ENCODE measurements at regions of chr5 and their contacts with region 1.

Region 1: DNA sequence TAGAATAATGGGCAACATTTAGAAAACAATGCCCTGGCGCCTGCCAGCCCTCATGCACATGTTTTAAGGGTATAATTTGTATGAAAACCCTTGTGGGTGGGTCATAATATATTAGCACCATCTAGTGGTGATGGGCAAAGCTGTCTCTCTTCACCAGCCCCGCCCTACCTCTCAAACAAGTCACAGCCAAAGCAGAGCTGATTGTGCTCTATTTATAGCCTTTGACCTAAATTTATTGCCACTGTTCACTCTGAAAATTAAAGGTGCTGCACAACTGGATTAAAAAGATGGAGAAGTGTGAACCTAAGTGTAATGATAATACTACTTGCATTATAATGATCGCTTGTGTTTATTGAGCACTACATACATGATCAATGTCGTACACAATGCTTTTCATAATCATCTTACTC is 131.9 kb upstream of the ANKH start:
- DNase-seq: peak in 1 of 2 experiments; percentile 49
- H3K4me3 ChIP-seq: no peak overlapping the region
- H3K27ac ChIP-seq: no peak overlapping the region
- H3K4me1 ChIP-seq: no peaks in the 10 kb centered on the region
- H3K27me3 ChIP-seq: no peaks in the 10 kb centered on the region
- CTCF ChIP-seq: peak; percentile 46 to 78 (median 76)
- EP300 ChIP-seq: no peak
- POLR2A ChIP-seq: no peak
- RAD21 ChIP-seq: peak; percentile 88

Region 2: GRCh38 chr5:14685757-14686156 is 317.8 kb before region 1 on chr5:
- CTCF ChIA-PET with region 1: interaction called, 54 read pairs
- POLR2A ChIA-PET with region 1: no interaction called
- DNase-seq: no peak
- H3K4me3 ChIP-seq: no peak overlapping the region
- H3K27ac ChIP-seq: no peak overlapping the region
- H3K4me1 ChIP-seq: no peaks in the 10 kb centered on the region
- H3K27me3 ChIP-seq: no peaks in the 10 kb centered on the region
- CTCF ChIP-seq: peak in 2 of 3 experiments; percentile 73 to 74; a peak in 3 of 4 replicates
- EP300 ChIP-seq: no peak
- POLR2A ChIP-seq: no peak
- RAD21 ChIP-seq: peak; percentile 81 to 89

Region 3: DNA sequence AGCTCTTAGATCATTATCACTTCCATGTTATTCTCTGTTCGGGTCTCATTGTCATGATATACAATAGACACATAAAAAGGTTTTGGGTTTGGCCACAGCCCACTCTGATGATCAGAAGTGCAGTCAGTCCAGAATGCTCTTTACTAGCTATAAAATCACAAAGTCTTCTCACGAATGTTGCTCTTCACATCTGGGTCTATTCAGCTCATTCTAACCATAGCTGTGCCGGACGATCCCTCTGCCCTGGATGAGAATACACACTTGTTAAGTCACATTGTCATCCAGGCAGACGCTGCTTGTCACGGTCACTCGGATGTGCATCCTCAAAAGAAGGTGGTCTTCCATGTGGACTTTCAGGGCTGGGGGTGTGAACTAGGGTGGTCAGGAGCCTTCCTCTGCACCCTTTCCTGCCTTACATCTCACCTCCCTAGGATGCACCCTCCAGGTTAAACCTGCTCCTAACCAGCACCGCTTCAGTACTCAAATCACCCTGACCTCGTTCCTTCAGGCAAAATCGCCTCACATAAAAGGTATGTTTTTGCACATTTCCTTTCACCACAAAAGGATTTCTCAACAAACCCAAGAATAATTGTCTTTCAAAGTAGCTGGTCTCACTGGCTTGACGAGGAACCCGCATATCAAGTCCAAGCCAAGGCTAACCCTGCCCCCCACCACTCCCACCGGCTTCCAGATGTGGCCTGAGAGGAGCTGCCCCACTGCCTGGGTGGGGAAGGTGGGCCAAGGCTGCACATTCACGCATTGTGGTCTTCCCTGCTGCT is 153.8 kb before region 1 on chr5:
- CTCF ChIA-PET with region 1: interaction called, 10 read pairs
- POLR2A ChIA-PET with region 1: no interaction called
- DNase-seq: no peak
- H3K4me3 ChIP-seq: no peak overlapping the region
- H3K27ac ChIP-seq: no peak overlapping the region
- H3K4me1 ChIP-seq: peaks cover 5 to 14% (median 13%) of the 10 kb centered on the region in 4 experiments
- H3K27me3 ChIP-seq: no peaks in the 10 kb centered on the region
- CTCF ChIP-seq: no peak
- EP300 ChIP-seq: no peak
- POLR2A ChIP-seq: no peak
- RAD21 ChIP-seq: no peak

Region 4: DNA sequence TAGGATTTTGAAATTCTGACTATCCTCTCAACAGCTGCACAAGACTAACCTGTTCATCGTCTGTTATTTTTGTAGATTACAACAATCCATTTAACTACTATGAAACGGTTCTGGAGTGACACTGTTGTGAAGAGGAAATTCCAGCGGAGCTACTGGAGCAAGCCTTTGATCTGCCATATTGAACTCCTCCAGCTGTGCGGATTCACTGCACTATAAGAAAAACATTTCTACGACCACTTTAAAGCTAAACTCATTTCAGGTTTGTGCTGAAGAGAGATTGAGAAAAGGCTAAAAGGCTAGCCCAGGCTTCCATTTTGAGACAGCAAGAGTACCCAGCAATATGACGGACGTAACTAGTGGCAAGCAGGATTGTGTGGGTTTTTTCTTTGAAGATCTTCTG is 27.0 kb before region 1 on chr5:
- CTCF ChIA-PET with region 1: interaction called, 11 read pairs
- POLR2A ChIA-PET with region 1: no interaction called
- DNase-seq: no peak
- H3K4me3 ChIP-seq: no peak overlapping the region
- H3K27ac ChIP-seq: no peak overlapping the region
- H3K4me1 ChIP-seq: no peaks in the 10 kb centered on the region
- H3K27me3 ChIP-seq: no peaks in the 10 kb centered on the region
- CTCF ChIP-seq: no peak
- EP300 ChIP-seq: no peak
- POLR2A ChIP-seq: no peak
- RAD21 ChIP-seq: no peak

Region 5: GRCh38 chr5:15026011-15026893 is 22.7 kb after region 1 on chr5:
- CTCF ChIA-PET with region 1: interaction called, 11 read pairs
- POLR2A ChIA-PET with region 1: no interaction called
- DNase-seq: no peak
- H3K4me3 ChIP-seq: peak overlapping the region in 1 of 4 experiments; percentile 25; a peak in 2 of 8 replicates
- H3K27ac ChIP-seq: no peak overlapping the region
- H3K4me1 ChIP-seq: peaks cover 4 to 9% (median 6%) of the 10 kb centered on the region in 4 experiments
- H3K27me3 ChIP-seq: peaks cover 31 to 53% (median 43%) of the 10 kb centered on the region in 4 experiments
- CTCF ChIP-seq: no peak
- EP300 ChIP-seq: no peak
- POLR2A ChIP-seq: no peak
- RAD21 ChIP-seq: no peak